Astrocyte of the cerebellum (primary cell): ENCODE measurements at regions of chr12 and their contacts with region 1.

Region 1: GRCh38 chr12:129202109-129202830 is 349.0 kb downstream of the GLT1D1 start:
- DNase-seq: no peak
- H3K4me3 ChIP-seq: no peak overlapping the region
- CTCF ChIP-seq: no peak

Region 2: GRCh38 chr12:128761379-128761790 is 440.9 kb before region 1 on chr12:
- in situ Hi-C with region 1: no loop called
- DNase-seq: no peak
- H3K4me3 ChIP-seq: no peak overlapping the region
- CTCF ChIP-seq: no peak

Region 3: DNA sequence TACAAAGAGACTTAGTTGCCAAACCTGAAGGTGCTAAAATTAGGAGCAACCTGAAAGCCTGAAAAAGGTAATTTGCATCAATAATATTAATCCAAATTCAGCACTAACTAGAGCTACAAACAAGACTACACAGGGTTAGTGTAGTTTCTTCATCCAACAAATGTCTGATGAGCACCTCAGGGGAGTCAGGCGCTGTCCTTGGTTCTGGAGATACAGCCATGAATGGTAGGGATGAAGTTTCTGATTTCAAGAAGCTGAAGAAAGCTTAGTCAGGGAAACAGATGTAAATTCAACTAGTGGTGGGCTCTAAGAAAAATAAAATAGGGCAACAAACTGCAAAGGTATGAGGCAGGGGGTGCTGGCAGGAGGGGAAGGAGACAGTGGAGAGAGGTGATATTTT is 82.7 kb before region 1 on chr12:
- in situ Hi-C with region 1: loop called (anchors 5 kb)
- DNase-seq: no peak
- H3K4me3 ChIP-seq: no peak overlapping the region
- CTCF ChIP-seq: no peak